Left cardiac atrium (tissue), 4 donors: ENCODE measurements at regions of chr4 and their contacts with region 1.

Region 1: DNA sequence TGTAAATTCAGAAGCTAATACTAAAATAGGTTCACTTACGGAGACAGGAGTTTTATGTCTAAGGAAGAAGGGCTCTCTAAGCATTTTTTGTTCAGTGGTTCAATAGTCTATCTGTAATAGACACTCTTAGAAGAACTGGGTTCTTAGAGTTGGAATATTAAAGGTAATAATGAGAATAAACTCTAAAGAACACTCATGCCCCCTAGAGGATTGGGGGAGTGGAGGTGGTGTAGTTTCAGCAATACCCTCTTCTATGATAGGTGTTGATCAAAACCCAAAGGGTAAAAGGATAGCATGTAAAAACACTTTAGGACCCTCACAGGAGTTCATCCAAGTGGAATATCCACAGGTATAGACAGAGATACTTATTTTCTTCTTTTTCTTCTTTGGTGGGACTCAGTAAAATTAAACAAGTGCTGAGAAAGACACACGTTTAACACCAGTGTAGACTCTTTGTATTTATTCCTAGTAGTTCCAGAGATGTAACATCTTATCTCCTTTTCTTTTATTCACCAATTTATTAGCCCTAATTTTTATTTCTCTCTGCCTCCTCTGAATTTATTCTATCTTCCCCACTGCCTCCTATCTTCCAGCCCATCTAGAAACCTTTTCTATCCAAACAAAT is 25.7 kb upstream of the MND1 start:
- DNase-seq: no peak
- ATAC-seq: peak; percentile 41 to 74

Region 2: DNA sequence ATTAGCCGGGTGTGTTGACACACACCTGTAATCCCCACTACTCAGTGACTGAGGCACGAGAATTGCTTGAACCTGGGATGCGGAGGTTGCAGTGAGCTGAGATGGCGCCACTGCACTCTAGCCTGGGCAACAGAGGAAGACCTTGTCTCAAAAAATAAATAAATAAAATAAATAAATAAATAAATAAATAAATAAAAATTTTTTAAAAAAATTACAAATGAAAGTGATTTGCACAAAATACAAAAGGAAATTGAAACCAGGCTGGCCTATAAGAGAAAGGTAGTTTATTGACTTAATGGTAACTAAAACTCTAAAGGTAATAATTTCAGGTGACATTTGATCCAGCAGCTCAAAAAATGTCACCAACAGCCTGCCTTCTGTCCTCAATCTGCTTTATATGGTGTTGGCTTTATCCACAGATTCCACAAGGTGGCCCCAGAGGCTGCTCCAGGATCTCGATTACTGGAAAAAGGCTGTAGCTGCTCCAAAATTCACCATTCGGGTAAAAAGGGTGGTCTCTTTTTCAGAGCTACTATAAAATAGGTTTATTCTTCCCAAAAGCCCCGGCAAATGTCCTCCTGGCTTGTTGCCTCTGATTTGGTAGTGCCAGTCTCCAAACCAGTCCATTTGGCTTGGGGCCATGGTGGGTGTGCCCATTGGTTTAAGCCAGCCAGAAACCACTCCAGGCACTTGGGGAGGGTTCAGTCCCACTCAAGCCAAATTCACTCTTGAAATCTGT is 175.9 kb before region 1 on chr4:
- intact Hi-C with region 1: loop called (anchors 2 to 5 kb)
- DNase-seq: peak; percentile 81
- ATAC-seq: peak; percentile 81 to 84

Region 3: GRCh38 chr4:153189016-153189801 is 129.6 kb before region 1 on chr4:
- intact Hi-C with region 1: no loop called
- DNase-seq: no peak
- ATAC-seq: peak in 1 of 2 donors; percentile 72

Region 4: DNA sequence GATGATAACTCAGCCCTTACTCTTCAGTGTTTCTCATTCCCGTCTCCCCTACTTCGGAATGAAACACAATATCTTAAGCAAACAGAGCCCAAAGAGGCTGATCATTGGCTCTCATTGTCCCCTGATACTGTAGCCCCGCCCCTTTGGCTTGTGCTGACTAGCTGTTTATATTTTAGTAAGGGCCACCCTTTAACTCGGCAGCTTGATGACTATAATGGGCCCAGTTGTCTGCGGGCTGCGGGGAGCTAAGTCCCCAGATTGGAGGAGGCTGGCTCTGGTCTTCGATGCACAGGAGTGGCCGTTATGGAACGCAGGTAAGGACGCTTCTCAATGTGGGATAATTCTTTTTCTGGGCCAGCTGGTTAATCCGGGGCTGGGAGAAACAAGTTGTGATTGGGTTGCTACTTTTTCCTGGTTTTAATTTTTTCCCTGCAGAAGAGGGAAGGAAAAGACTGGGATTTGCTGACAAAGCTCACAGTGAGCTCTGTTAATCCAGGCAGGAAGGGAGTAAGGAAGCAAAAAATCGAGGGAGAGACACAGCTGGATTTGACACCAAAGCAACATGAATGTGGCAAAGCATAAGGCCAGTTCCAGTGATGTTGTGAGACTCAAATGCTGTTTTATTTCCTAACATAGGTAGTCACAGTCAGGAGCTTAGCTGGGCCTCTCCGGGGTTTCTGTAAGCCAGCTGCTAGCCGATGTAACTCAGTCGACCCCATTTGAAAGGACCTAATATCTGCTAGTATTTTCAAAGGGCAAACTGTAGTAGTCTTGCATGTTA is 114.4 kb before region 1 on chr4 and contains the start of gene TRIM2:
- intact Hi-C with region 1: loop called (anchors 2 to 5 kb)
- DNase-seq: peak; percentile 74
- ATAC-seq: peak; percentile 85 to 90
- total RNA-seq, gene TRIM2: 19.8 to 22.6 TPM